ENCODE measurements at regions of chr12 and their contacts with region 1.

Region 1: DNA sequence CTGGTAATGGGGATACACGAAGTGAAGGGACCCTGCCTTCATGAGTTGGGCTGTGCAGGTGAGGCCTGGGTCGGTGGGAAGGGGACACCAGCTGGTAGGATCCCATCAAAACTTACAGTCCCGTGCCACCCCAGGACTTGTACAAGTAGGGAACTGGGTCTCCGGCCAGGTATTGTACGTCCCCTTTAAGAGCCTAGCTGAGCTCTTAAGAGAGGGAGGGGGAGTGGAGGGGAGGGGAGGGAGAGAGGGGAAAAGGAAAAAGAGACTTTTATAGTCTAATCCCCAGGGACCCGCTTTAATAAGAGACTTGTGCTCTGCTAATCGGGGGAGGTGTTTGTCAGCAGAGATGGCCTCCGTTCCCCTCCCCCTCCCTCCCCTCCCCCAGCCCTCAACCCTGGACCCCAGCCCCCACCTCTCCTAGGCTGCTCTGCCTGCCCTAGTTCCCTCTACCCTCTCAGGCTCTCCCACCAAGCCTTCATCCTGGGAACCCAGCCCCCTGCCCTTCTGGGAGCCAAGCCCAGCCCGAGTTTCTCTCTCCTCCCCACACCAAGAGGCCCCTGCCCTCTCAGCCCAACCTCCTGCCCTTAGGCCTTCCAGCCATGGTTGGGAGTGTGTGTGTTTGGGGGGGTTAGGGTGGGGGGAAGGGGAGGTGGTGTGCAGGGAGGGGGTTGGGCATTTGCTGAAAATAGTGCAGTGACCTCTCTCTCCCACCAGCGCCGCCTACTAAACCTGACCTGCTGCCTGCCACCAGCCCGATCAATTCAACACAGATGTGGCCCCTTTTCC is 2.6 kb downstream of the GDF11 start:
- DNase-seq: no peak
- ATAC-seq: peak; percentile 23
- H3K4me3 ChIP-seq: no peak overlapping the region
- H3K27ac ChIP-seq: peak overlapping the region in 1 of 2 donors; percentile 37
- H3K4me1 ChIP-seq: no peaks in the 10 kb centered on the region
- H3K27me3 ChIP-seq: no peaks in the 10 kb centered on the region

Region 2: DNA sequence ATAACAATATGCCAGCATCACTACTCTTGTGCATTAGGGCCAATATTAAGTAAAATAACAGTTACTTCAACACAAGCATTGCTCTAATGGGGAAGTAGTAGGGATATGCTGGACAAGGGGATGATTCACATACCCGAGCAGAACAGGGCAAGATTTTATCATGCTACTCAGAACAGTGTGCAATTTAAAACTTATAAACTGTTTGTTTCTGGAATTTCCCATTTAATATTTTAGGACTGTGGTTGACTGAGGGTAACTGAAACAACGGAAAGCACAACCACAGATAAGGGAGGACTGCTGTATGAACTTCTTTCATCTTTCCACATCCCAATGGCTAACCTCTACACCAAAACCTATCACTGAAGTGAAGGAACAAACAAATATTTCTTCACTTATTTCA is 35.1 kb after region 1 on chr12:
- intact Hi-C with region 1: loop called in 1 of 2 experiments (anchors 5 kb)
- DNase-seq: no peak
- ATAC-seq: no peak
- H3K4me3 ChIP-seq: no peak overlapping the region
- H3K27ac ChIP-seq: no peak overlapping the region
- H3K4me1 ChIP-seq: no peaks in the 10 kb centered on the region
- H3K27me3 ChIP-seq: no peaks in the 10 kb centered on the region

Region 3: GRCh38 chr12:55940065-55940732 is 194.6 kb after region 1 on chr12:
- intact Hi-C with region 1: loop called (anchors 2 to 5 kb)
- DNase-seq: peak; percentile 88 to 91
- ATAC-seq: peak; percentile 92
- H3K4me3 ChIP-seq: no peak overlapping the region
- H3K27ac ChIP-seq: peak overlapping the region in 1 of 2 donors; percentile 15
- H3K4me1 ChIP-seq: no peaks in the 10 kb centered on the region
- H3K27me3 ChIP-seq: no peaks in the 10 kb centered on the region

Region 4: GRCh38 chr12:56007564-56008559 is 262.3 kb after region 1 on chr12:
- intact Hi-C with region 1: no loop called
- DNase-seq: peak; percentile 64 to 89
- ATAC-seq: peak; percentile 85
- H3K4me3 ChIP-seq: peak overlapping the region; percentile 78 to 100
- H3K27ac ChIP-seq: peak overlapping the region; percentile 65 to 73
- H3K4me1 ChIP-seq: no peaks in the 10 kb centered on the region
- H3K27me3 ChIP-seq: no peaks in the 10 kb centered on the region

Measured in aorta (tissue), 5 donors.